ENCODE measurements at regions of chr10 and their contacts with region 1.

Region 1: DNA sequence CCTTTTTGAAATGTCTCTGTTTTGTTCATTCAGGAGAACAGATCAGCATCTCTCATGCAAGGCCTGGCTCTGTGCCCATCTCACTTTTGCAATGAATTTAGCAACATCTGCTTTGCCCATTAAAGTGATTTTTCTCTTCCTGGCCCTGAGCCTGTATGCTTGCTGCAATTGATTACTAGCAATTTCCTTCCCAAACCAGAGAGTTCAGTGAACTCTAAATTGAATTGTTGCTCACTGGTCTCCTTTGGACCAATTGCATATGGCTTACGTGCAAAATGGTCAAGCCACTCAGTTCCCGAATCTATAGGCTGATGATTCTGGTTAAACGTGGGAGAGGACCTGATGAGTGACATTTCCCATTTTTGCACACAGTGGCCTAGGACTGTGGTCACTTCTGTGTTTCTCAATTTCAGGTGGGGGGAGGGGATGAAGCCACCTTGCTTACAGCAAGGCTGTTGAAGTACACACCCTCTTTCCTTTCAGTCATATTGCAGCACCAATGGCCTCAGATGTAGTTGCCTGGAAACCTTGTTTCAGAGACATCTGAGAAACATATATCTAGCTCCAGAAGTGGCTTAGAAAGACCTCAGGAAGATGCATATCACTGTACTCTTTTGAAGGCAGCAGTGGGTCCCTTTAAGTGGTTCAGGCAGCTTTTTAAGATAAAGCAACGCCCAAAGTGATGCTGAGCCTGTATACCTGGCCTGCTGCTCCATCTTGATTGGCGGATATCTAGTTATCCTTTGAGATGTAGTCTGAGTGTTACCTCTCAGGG is 201.4 kb downstream of the PTEN start:
- DNase-seq: peak; percentile 95
- ATAC-seq: peak; percentile 74
- H3K4me3 ChIP-seq: no peak overlapping the region; the same call in 1 of the 2 replicates
- H3K27ac ChIP-seq: peak overlapping the region; percentile 92
- H3K4me1 ChIP-seq: peaks cover 88% of the 10 kb centered on the region
- H3K27me3 ChIP-seq: no peaks in the 10 kb centered on the region
- CTCF ChIP-seq: no peak
- EP300 ChIP-seq: peak; percentile 90 to 93; a peak in 3 of 4 replicates
- POLR2A ChIP-seq: no peak
- RAD21 ChIP-seq: 0 out of 2 replicates have a peak, but pooled peaks have one; percentile 11

Region 2: DNA sequence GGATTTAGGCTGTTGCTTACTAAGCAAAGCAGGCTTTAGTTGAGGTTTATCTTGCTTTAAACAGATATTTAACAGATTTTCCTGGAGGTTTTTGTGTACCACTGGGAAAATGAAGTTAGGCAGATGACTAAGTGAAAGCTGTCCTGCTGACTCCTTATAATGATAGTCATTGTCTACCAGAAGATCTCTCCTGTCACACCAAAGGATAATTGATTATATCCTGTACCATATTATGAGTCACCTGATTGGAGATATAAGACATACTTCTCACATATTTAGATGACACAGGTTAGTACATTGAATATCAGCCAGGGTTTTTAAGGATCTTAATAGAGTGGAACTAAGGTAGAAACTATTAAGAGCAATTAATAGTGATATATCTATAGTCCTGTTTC is 133.0 kb before region 1 on chr10:
- CTCF ChIA-PET with region 1: no interaction called
- POLR2A ChIA-PET with region 1: interaction called, 3 read pairs
- RAD21 ChIA-PET with region 1: interaction called, 4 read pairs
- SMC1A ChIA-PET with region 1: interaction called, 8 read pairs
- in situ Hi-C with region 1: no loop called
- intact Hi-C with region 1: loop called (anchors 1 kb)
- DNase-seq: no peak
- ATAC-seq: peak; percentile 42
- H3K4me3 ChIP-seq: no peak overlapping the region
- H3K27ac ChIP-seq: peak overlapping the region; percentile 71
- H3K4me1 ChIP-seq: peaks cover 39% of the 10 kb centered on the region
- H3K27me3 ChIP-seq: no peaks in the 10 kb centered on the region
- CTCF ChIP-seq: no peak
- EP300 ChIP-seq: no peak
- POLR2A ChIP-seq: no peak
- RAD21 ChIP-seq: no peak

Region 3: GRCh38 chr10:88045656-88046415 is 19.0 kb before region 1 on chr10:
- CTCF ChIA-PET with region 1: interaction called, 3 read pairs
- POLR2A ChIA-PET with region 1: no interaction called
- RAD21 ChIA-PET with region 1: interaction called, 4 read pairs
- SMC1A ChIA-PET with region 1: interaction called, 11 read pairs
- in situ Hi-C with region 1: no loop called
- intact Hi-C with region 1: no loop called
- DNase-seq: no peak
- ATAC-seq: no peak
- H3K4me3 ChIP-seq: no peak overlapping the region
- H3K27ac ChIP-seq: no peak overlapping the region
- H3K4me1 ChIP-seq: no peaks in the 10 kb centered on the region
- H3K27me3 ChIP-seq: no peaks in the 10 kb centered on the region
- CTCF ChIP-seq: no peak
- EP300 ChIP-seq: no peak
- POLR2A ChIP-seq: no peak
- RAD21 ChIP-seq: no peak

Region 4: GRCh38 chr10:88091490-88092105 is 26.8 kb after region 1 on chr10:
- CTCF ChIA-PET with region 1: interaction called, 36 read pairs
- POLR2A ChIA-PET with region 1: interaction called, 9 read pairs
- RAD21 ChIA-PET with region 1: interaction called, 89 read pairs
- SMC1A ChIA-PET with region 1: interaction called, 116 read pairs
- in situ Hi-C with region 1: no loop called
- intact Hi-C with region 1: loop called (anchors 1 kb)
- DNase-seq: peak; percentile 98
- ATAC-seq: peak; percentile 88
- H3K4me3 ChIP-seq: 0 out of 2 replicates have a peak overlapping the region, but pooled peaks have one; percentile 20
- H3K27ac ChIP-seq: peak overlapping the region; percentile 97
- H3K4me1 ChIP-seq: peaks cover 31% of the 10 kb centered on the region
- H3K27me3 ChIP-seq: no peaks in the 10 kb centered on the region
- CTCF ChIP-seq: peak in 1 of 3 experiments; percentile 23; a peak in 1 of 6 replicates
- EP300 ChIP-seq: peak; percentile 92 to 94
- POLR2A ChIP-seq: no peak
- RAD21 ChIP-seq: peak; percentile 51

Region 5: DNA sequence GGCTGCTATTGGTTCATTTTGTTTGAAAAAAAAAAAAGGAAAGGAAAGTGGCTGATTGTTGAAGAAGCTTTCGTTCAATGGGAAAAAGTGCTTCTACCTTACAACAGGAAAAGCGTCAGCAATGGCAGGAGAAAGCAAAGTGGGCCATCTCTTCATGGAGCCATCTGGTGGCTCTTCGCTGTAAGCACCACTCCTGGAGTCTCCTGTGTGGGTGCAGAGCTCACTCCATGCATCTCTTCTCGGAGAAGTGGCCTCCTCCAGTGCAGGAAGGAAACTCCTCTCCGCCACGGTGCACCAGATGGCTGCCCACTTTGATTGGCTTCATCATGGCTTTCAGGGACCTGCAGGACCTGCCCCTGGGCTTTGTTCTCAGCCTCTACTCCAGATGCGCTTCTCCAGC is 49.6 kb after region 1 on chr10:
- CTCF ChIA-PET with region 1: interaction called, 7 read pairs
- POLR2A ChIA-PET with region 1: interaction called, 3 read pairs
- RAD21 ChIA-PET with region 1: interaction called, 28 read pairs
- SMC1A ChIA-PET with region 1: interaction called, 229 read pairs
- in situ Hi-C with region 1: no loop called
- intact Hi-C with region 1: loop called (anchors 2 kb)
- DNase-seq: no peak
- ATAC-seq: peak; percentile 61
- H3K4me3 ChIP-seq: no peak overlapping the region
- H3K27ac ChIP-seq: peak overlapping the region; percentile 86
- H3K4me1 ChIP-seq: peaks cover 87% of the 10 kb centered on the region
- H3K27me3 ChIP-seq: no peaks in the 10 kb centered on the region
- CTCF ChIP-seq: peak; percentile 69 to 73 (median 72)
- EP300 ChIP-seq: no peak
- POLR2A ChIP-seq: no peak
- RAD21 ChIP-seq: peak; percentile 86

Region 6: DNA sequence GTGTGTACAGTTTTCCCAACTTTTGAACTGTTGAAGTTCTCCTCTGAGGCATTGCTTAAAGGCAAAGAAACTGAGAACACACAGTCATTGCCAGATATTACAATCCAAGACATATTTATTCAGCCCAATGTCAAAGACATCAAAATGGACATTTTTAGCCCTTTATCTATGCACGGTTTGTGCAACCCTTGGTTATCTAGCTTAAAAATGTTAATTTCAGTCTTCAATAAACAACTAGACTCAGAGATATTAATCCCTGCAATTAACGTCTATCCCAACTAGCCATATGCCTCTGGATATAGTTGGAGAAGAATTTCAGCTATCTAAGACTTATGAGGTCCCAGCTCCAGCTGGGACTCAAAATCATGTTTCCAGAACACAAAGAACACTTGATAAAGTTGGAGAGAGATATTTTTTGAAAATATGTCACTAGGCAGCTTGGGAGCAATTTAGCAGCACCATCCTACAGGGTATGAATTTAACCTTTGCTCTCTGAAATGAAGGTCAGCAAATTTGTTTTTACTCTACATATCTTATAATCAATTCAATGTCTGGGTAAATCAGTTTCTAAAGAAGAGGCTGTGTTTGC is 161.4 kb after region 1 on chr10:
- CTCF ChIA-PET with region 1: no interaction called
- POLR2A ChIA-PET with region 1: no interaction called
- RAD21 ChIA-PET with region 1: no interaction called
- SMC1A ChIA-PET with region 1: no interaction called
- in situ Hi-C with region 1: no loop called
- intact Hi-C with region 1: no loop called
- DNase-seq: no peak
- ATAC-seq: no peak
- H3K4me3 ChIP-seq: no peak overlapping the region
- H3K27ac ChIP-seq: no peak overlapping the region
- H3K4me1 ChIP-seq: no peaks in the 10 kb centered on the region
- H3K27me3 ChIP-seq: no peaks in the 10 kb centered on the region
- CTCF ChIP-seq: no peak
- EP300 ChIP-seq: no peak
- POLR2A ChIP-seq: no peak
- RAD21 ChIP-seq: no peak

Measured in GM12878 (cell line).